ENCODE measurements at regions of chr12 and their contacts with region 1.

Region 1: DNA sequence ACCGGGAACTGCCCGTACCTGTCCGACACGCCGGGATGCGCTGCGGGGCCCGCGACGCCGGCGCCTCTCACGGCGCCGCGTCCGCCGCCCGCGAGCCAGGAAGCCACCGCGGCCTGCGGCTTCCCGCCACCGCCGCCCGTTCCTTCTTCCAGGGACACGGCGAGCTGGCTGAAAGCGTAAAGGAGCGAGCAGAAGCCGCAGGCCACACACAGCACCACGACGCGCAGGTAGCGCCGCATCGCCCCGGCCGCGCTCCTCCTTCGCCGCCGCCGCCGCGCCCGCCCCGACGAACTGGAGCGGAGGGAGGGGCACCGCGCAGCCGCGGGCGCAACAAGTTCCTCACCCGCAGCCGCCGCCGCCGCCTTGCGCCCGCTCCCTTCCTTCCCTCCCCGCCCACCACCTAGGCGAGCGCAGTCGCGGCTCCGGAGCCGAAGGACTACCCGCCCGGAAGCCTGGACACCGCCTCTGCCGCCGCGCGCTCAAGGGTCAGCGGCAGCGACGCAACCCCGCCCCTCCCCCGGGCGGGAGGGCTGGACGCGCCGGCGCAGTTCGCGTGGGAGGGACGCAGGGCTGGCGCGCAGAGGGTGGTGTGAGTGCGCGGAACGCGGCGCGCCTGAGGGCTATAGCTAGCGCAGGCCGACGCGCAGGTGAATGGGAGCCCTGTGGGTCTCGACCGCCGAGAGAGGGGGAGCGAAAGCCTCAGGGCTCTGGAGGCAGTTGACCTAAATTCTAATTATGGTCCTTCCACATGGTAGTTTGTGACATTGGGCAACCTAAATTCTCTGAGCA is at the start of gene GXYLT1:
- DNase-seq: peak; percentile 80
- H3K4me3 Mint-ChIP-seq: peak within 1 kb of the TSS; percentile 90
- H3K27ac Mint-ChIP-seq: peak within 1 kb of the TSS; percentile 90
- H3K4me1 Mint-ChIP-seq: peaks cover 37% of the 10 kb centered on the region
- H3K27me3 Mint-ChIP-seq: peaks cover 4% of the 10 kb centered on the region
- total RNA-seq, gene GXYLT1: 10.5 and 11.4 TPM in 2 replicates

Region 2: GRCh38 chr12:42097971-42098370 is 46.6 kb before region 1 on chr12:
- intact Hi-C with region 1: loop called (anchors 1 kb)
- DNase-seq: no peak
- H3K4me3 Mint-ChIP-seq: peak overlapping the region; percentile 86
- H3K27ac Mint-ChIP-seq: peak overlapping the region; percentile 85
- H3K4me1 Mint-ChIP-seq: peaks cover 39% of the 10 kb centered on the region
- H3K27me3 Mint-ChIP-seq: no peaks in the 10 kb centered on the region

Region 3: DNA sequence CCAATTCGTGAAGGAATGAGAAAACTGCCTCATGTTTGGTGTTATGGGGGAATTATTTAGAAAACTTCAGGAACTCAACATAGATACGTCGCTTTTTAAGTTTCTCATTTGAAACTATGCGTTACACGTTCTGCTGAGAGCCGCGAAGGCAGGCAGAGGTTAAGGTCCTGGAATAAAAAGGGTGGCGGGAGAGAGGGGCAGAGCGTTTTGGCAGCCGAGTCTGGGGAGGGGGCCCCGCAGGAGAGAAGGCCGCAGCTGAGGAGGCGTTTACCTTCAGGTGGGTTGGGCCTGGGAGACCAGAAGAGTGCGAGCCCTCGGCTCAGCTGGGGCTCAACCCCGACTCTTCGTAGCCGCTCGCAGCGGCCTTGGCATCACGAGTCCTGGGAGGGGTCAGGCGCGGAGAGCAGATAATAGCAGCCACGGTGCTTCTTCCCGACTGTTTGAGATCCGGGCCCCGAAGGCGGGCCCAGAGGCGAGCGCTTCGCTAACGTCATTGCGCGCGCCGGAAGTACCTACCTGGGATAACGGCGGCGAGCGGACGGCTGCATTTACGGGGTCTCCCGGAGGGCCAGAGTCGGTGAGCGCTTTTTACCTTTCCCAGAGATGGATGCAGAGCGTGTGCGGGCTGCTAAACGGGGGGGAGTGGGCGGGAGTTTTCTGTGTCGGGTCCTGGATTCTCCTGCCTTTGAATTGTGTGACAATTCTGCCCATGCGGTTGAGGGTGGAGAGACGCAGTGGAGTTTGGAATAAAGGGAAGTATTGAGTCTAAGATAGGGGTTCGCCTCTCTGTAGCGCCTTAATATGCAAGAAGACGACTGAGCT is 181.3 kb after region 1 on chr12 and contains the starts of genes PPHLN1 and ZCRB1:
- intact Hi-C with region 1: loop called (anchors 1 kb)
- DNase-seq: peak; percentile 79
- H3K4me3 Mint-ChIP-seq: peak within 1 kb of the TSS; percentile 98
- H3K27ac Mint-ChIP-seq: peak within 1 kb of the TSS; percentile 97
- H3K4me1 Mint-ChIP-seq: peaks cover 46% of the 10 kb centered on the region
- H3K27me3 Mint-ChIP-seq: no peaks in the 10 kb centered on the region
- total RNA-seq, gene PPHLN1: 89.2 and 90.1 TPM in 2 replicates
- total RNA-seq, gene ZCRB1: 47.4 and 58.2 TPM in 2 replicates

Region 4: DNA sequence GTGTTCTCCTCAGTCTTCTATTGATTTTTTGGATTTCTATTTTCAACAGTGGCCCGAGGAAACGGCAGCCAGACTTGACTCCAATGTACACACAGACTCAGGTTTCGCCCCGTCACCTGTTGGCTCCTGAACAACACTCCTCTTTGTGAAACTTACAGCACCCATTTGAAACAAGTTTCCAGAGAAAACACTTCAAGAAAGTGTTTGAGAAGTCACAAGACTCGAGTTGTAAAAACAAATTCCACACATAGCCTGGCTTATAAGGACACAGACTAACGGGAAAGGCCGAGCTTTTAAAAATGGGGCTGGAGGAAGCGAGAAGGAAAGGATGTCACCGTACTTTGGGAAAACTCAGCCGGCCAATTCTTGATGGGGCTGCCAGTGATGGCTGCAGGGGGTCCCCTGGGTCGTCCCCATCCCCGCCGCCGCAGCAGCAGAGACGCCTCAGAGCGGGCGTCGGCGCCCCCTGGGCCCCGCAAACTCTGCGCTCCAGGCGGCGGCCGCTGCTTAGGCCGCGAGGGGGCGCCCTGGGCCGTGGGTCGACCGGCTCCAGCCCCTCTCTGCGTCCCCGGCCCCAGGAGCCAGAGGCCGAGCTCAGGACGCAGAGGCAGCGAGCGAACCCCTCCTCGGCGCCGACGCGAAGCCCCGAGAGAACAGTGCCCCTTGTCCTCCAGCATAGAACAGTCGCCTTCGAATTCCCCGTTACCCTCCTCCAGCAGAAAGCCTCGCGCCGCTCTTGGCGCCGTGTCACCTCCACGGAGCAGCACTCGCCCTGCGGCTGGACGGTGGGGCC is 338.0 kb after region 1 on chr12:
- intact Hi-C with region 1: loop called (anchors 5 kb)
- DNase-seq: peak; percentile 31
- H3K4me3 Mint-ChIP-seq: peak overlapping the region; percentile 78
- H3K27ac Mint-ChIP-seq: no peak overlapping the region
- H3K4me1 Mint-ChIP-seq: peaks cover 10% of the 10 kb centered on the region
- H3K27me3 Mint-ChIP-seq: peaks cover 72% of the 10 kb centered on the region

Region 5: GRCh38 chr12:43805860-43806736 is 1661.5 kb after region 1 on chr12 and contains the start of gene TWF1:
- intact Hi-C with region 1: loop called (anchors 10 kb)
- DNase-seq: peak; percentile 87
- H3K4me3 Mint-ChIP-seq: peak within 1 kb of the TSS; percentile 96
- H3K27ac Mint-ChIP-seq: peak within 1 kb of the TSS; percentile 100
- H3K4me1 Mint-ChIP-seq: peaks cover 33% of the 10 kb centered on the region
- H3K27me3 Mint-ChIP-seq: peaks cover 2% of the 10 kb centered on the region
- total RNA-seq, gene TWF1: 28.4 and 29.2 TPM in 2 replicates